GM12878 (cell line): ENCODE measurements at regions of chrX and their contacts with region 1.

Region 1: GRCh38 chrX:139559383-139560042 is 29.0 kb downstream of the F9 start:
- DNase-seq: peak; percentile 30
- ATAC-seq: peak; percentile 97
- H3K4me3 ChIP-seq: no peak overlapping the region
- H3K27ac ChIP-seq: no peak overlapping the region
- H3K4me1 ChIP-seq: peaks cover 6% of the 10 kb centered on the region
- H3K27me3 ChIP-seq: no peaks in the 10 kb centered on the region
- CTCF ChIP-seq: peak; percentile 51 to 61 (median 58); a peak in 5 of 6 replicates
- EP300 ChIP-seq: no peak
- POLR2A ChIP-seq: no peak
- RAD21 ChIP-seq: peak; percentile 78

Region 2: DNA sequence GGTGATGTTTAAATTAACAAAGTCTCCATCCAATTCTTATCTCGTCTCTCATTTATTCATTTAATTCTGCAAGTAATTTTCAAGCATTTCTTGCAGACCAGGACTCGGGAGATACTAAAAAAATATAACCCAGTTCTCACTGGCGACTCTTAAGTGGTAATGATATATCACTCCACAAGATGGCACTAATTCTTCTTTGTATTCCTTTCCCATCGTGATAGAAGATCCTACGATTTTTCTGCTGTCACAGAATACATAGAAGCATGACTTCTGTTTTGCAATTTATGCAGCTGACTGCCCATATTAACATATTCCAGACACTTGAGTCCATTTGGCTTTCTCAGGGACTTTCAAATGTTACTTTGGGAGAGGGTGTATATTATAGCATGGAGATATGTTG is 784.0 kb before region 1 on chrX:
- CTCF ChIA-PET with region 1: interaction called, 11 read pairs
- POLR2A ChIA-PET with region 1: no interaction called
- RAD21 ChIA-PET with region 1: interaction called, 4 read pairs
- SMC1A ChIA-PET with region 1: interaction called, 4 read pairs
- in situ Hi-C with region 1: loop called (anchors 10 kb)
- intact Hi-C with region 1: loop called (anchors 1 kb)
- DNase-seq: no peak
- ATAC-seq: peak; percentile 57
- H3K4me3 ChIP-seq: no peak overlapping the region
- H3K27ac ChIP-seq: no peak overlapping the region
- H3K4me1 ChIP-seq: no peaks in the 10 kb centered on the region
- H3K27me3 ChIP-seq: no peaks in the 10 kb centered on the region; a peak in 2 of 4 replicates
- CTCF ChIP-seq: peak; percentile 17 to 36 (median 18); a peak in 3 of 6 replicates
- EP300 ChIP-seq: no peak
- POLR2A ChIP-seq: no peak
- RAD21 ChIP-seq: peak; percentile 44

Region 3: DNA sequence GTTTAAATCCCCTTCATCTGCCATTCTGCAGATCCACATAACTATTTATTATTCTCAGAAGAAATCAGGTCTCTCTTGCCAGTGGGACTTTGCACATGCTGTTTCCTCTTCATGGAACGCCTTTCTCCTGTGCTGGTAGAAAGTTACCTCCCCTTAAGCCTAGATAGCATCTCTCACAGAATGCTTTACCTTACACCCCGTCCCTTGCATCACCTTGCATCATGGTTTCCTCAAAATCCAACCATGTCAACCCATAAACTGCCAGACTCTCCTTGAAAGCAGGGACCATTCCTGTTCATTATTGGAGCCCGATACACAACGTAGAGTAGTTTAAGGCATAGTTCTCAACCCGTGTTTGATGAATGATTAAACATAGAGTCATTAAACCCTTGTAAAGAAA is 425.2 kb before region 1 on chrX:
- CTCF ChIA-PET with region 1: interaction called, 3 read pairs
- POLR2A ChIA-PET with region 1: no interaction called
- RAD21 ChIA-PET with region 1: no interaction called
- SMC1A ChIA-PET with region 1: interaction called, 3 read pairs
- in situ Hi-C with region 1: loop called (anchors 10 kb)
- intact Hi-C with region 1: loop called (anchors 5 kb)
- DNase-seq: no peak
- ATAC-seq: no peak
- H3K4me3 ChIP-seq: no peak overlapping the region
- H3K27ac ChIP-seq: no peak overlapping the region
- H3K4me1 ChIP-seq: no peaks in the 10 kb centered on the region
- H3K27me3 ChIP-seq: no peaks in the 10 kb centered on the region
- CTCF ChIP-seq: no peak
- EP300 ChIP-seq: no peak
- POLR2A ChIP-seq: no peak
- RAD21 ChIP-seq: no peak

Region 4: DNA sequence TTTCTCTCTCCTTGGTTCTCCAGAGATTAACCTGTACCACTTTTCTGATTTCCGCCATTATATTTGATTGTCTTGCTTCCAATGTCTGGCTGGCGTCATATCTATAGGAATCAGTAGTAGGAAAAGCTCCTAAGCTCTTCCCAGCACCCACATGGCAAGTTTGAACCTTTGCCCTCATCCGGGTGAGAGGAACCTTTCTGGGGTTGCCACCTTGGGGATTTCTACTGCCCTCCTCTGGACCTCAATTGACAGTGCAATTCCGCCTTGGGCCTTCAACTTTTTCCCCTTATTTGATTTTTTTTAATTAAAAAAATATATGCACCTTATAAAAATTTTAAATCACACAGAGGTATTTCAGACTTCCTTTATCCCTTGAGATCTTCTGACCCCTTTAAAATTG is 407.8 kb after region 1 on chrX:
- CTCF ChIA-PET with region 1: no interaction called
- POLR2A ChIA-PET with region 1: no interaction called
- RAD21 ChIA-PET with region 1: no interaction called
- SMC1A ChIA-PET with region 1: no interaction called
- in situ Hi-C with region 1: no loop called
- intact Hi-C with region 1: loop called (anchors 10 kb)
- DNase-seq: no peak
- ATAC-seq: peak; percentile 64; the same call in 2 of the 3 replicates
- H3K4me3 ChIP-seq: no peak overlapping the region
- H3K27ac ChIP-seq: no peak overlapping the region
- H3K4me1 ChIP-seq: no peaks in the 10 kb centered on the region
- H3K27me3 ChIP-seq: no peaks in the 10 kb centered on the region
- CTCF ChIP-seq: peak; percentile 36 to 47 (median 41)
- EP300 ChIP-seq: no peak
- POLR2A ChIP-seq: no peak
- RAD21 ChIP-seq: peak; percentile 41